Activated CD4-positive, alpha-beta memory T cell treated with anti-CD3 and anti-CD28 coated beads for 36 hours (primary cell): ENCODE measurements at regions of chr13 and their contacts with region 1.

Region 1: GRCh38 chr13:79451500-79451962 is 29.4 kb upstream of the NDFIP2 start:
- DNase-seq: peak; percentile 98
- H3K4me3 Mint-ChIP-seq: peak overlapping the region; percentile 74
- H3K27ac Mint-ChIP-seq: peak overlapping the region; percentile 97
- H3K4me1 Mint-ChIP-seq: peaks cover 84% of the 10 kb centered on the region
- H3K27me3 Mint-ChIP-seq: no peaks in the 10 kb centered on the region

Region 2: DNA sequence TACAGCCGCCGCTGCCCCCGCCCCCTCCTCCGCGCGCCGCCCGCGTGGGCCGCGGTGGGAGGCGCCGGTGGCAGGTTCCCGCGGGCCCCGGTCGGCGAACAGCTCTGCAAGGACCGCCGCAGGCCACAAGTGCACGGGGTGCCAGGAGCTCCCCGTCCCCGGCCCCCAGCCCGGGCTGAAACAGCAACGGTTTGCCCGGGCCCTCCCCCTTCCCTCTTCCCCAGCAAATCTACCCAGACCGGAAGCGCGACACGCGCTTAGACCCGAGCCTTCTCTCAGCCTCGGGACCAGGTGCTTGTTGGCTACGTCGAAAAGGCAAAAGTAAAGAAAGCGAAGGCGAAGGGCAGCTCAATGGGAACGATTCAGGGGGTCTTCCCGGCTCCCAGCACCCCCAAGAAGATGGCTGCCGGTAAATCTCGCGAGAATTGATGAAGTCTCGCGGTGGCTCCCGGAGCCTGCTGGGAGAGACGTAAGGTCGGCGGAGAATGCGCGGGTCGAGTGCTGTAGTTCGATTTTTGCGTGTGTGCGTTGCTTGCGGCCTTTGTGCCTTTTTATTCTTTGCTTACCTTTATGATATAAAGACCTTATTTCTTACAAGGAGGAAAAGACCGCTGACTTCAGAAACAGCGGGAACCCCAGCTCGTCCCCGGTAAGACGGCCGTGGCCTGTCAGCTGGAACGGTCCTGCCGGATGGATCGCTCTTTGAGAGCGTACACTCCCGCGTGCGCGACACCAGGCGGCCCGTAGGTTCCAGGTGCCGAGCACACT is 45.5 kb before region 1 on chr13 and contains the start of gene RBM26:
- CTCF ChIA-PET with region 1: interaction called, 4 read pairs
- POLR2A ChIA-PET with region 1: interaction called, 9 read pairs
- intact Hi-C with region 1: loop called (anchors 1 kb)
- DNase-seq: peak; percentile 96
- H3K4me3 Mint-ChIP-seq: peak within 1 kb of the TSS; percentile 88
- H3K27ac Mint-ChIP-seq: no peak within 1 kb of the TSS
- H3K4me1 Mint-ChIP-seq: peaks cover 38% of the 10 kb centered on the region
- H3K27me3 Mint-ChIP-seq: no peaks in the 10 kb centered on the region
- total RNA-seq, gene RBM26: 54.8 to 57.7 TPM

Region 3: GRCh38 chr13:79501538-79502232 is 50.2 kb after region 1 on chr13:
- CTCF ChIA-PET with region 1: no interaction called
- POLR2A ChIA-PET with region 1: interaction called, 5 read pairs
- intact Hi-C with region 1: loop called (anchors 1 kb)
- DNase-seq: no peak
- H3K4me3 Mint-ChIP-seq: no peak overlapping the region
- H3K27ac Mint-ChIP-seq: peak overlapping the region; percentile 74
- H3K4me1 Mint-ChIP-seq: peaks cover 83% of the 10 kb centered on the region
- H3K27me3 Mint-ChIP-seq: no peaks in the 10 kb centered on the region